ENCODE measurements at regions of chr17 and their contacts with region 1.

Region 1: GRCh38 chr17:17888821-17889220 is 52.0 kb upstream of the SREBF1 start:
- DNase-seq: no peak
- ATAC-seq: no peak

Region 2: GRCh38 chr17:17959520-17960361 is 70.9 kb after region 1 on chr17:
- intact Hi-C with region 1: no loop called
- DNase-seq: peak; percentile 19
- ATAC-seq: peak; percentile 69

Region 3: DNA sequence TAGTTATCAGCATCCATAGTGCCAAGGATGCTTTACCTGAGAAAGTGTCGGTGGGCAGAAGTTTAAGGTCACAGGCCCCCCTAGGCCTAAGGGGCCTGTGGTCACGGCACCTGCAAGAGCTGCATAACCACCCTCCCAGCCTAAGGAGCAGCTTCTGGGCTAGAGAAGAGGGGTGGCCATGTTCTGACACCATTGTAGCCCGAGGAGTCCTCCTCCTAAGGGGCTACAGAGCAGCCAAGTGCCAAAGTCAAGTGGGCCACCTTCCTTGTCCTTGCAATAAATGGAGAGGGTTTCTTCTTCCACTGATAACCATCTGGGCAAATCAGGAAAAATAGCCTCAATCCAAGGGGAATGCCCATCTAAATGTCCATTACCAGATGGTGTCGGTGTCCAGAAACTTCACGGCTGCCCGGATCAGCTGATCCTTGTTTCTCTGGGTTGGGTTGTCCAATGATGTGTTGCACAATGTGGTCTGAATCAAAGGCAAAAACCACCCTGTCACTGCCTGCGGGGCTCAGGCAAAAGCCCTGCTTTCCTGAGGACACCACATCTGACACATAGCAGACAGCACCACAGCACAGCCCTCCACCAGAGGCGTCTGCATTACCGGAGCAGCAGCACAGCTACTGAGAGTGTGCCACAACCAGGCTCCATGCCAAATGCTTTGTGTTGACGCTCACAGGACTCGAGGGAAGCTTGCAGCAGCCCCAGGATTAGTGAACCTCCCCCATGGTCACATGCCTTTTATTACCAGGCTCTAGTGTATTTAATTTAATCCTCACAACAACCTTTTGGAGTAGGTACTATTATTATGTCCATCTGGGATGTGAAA is 137.3 kb after region 1 on chr17:
- intact Hi-C with region 1: loop called (anchors 10 kb)
- DNase-seq: no peak
- ATAC-seq: peak; percentile 45

Region 4: GRCh38 chr17:18056212-18056611 is 167.4 kb after region 1 on chr17:
- intact Hi-C with region 1: no loop called
- DNase-seq: no peak
- ATAC-seq: no peak